Activated CD4-positive, alpha-beta T cell treated with anti-CD3 and anti-CD28 coated beads for 36 hours (primary cell): ENCODE measurements at regions of chr14 and their contacts with region 1.

Region 1: DNA sequence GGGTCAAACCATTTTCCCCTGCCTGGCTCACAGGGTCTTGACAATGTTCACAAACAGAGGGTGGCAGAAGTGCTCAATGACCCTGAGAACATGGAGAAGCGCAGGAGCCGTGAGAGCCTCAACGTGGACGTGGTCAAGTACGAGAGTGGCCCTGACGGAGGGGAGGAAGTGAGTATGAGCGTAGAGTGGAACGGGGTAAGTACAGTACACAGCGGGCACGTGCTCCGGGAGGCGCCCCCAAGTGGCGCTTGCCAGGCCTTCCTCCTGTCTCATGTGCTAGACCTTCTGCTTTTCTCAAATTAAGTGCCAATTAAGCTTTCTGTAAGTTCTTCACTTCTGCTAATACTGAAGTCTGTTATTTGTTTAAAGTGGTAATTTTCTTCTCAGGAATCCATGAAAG is 35.9 kb downstream of the XRCC3 start:
- DNase-seq: peak; percentile 74
- ATAC-seq: peak; percentile 98
- H3K4me3 Mint-ChIP-seq: no peak overlapping the region
- H3K27ac Mint-ChIP-seq: peak overlapping the region; percentile 33
- H3K4me1 Mint-ChIP-seq: peaks cover 2% of the 10 kb centered on the region
- H3K27me3 Mint-ChIP-seq: no peaks in the 10 kb centered on the region

Region 2: GRCh38 chr14:103576371-103577024 is 102.9 kb before region 1 on chr14:
- CTCF ChIA-PET with region 1: interaction called, 3 read pairs
- POLR2A ChIA-PET with region 1: no interaction called
- intact Hi-C with region 1: loop called (anchors 1 to 5 kb)
- DNase-seq: no peak
- ATAC-seq: no peak
- H3K4me3 Mint-ChIP-seq: no peak overlapping the region
- H3K27ac Mint-ChIP-seq: no peak overlapping the region
- H3K4me1 Mint-ChIP-seq: no peaks in the 10 kb centered on the region
- H3K27me3 Mint-ChIP-seq: no peaks in the 10 kb centered on the region

Region 3: DNA sequence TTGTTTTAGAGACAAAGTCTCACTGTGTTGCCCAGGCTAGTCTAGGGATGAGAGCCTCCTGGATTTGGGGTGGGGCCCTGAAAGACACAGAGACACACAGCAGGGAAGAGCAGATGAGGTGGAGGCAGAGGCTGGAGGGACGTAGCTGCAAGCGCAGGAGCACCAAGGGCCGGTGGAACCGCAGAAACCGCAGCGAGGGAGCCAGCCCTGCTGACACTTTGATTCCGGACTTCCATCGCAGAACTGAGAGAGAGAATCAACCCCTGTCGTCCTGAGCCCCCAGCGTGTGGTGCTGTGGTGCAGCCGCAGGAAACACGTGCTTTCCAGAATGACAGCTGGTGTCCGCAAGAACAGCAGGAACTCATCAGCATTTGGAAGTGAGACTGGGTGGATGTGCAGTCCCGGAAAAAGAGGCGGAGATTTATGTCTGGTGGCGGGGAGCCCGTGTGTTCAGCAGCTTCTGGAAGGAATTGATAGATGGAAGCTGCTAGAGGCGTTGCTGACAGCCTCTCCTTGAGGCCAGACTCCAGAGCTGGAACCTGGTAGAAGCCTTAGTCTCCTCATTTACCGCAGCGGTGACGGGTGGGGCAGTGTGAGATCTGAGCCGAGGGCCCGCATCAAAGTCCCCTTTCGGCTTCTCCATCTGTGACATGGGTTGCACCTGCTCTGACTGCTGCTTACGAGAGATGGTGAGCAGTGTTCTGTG is 72.2 kb before region 1 on chr14:
- CTCF ChIA-PET with region 1: interaction called, 3 read pairs
- POLR2A ChIA-PET with region 1: no interaction called
- intact Hi-C with region 1: loop called (anchors 5 kb)
- DNase-seq: peak; percentile 76
- ATAC-seq: peak; percentile 79
- H3K4me3 Mint-ChIP-seq: peak overlapping the region; percentile 29
- H3K27ac Mint-ChIP-seq: peak overlapping the region; percentile 59
- H3K4me1 Mint-ChIP-seq: peaks cover 20% of the 10 kb centered on the region
- H3K27me3 Mint-ChIP-seq: peaks cover 2% of the 10 kb centered on the region

Region 4: GRCh38 chr14:103613517-103613916 is 65.8 kb before region 1 on chr14:
- CTCF ChIA-PET with region 1: interaction called, 6 read pairs
- POLR2A ChIA-PET with region 1: no interaction called
- intact Hi-C with region 1: loop called (anchors 5 kb)
- DNase-seq: peak; percentile 44
- ATAC-seq: no peak
- H3K4me3 Mint-ChIP-seq: no peak overlapping the region
- H3K27ac Mint-ChIP-seq: no peak overlapping the region
- H3K4me1 Mint-ChIP-seq: peaks cover under 1% of the 10 kb centered on the region
- H3K27me3 Mint-ChIP-seq: peaks cover 2% of the 10 kb centered on the region

Region 5: GRCh38 chr14:103692159-103692558 is 12.8 kb after region 1 on chr14:
- CTCF ChIA-PET with region 1: interaction called, 12 read pairs
- POLR2A ChIA-PET with region 1: no interaction called
- intact Hi-C with region 1: no loop called
- DNase-seq: no peak
- ATAC-seq: no peak
- H3K4me3 Mint-ChIP-seq: no peak overlapping the region
- H3K27ac Mint-ChIP-seq: no peak overlapping the region
- H3K4me1 Mint-ChIP-seq: no peaks in the 10 kb centered on the region
- H3K27me3 Mint-ChIP-seq: no peaks in the 10 kb centered on the region

Region 6: DNA sequence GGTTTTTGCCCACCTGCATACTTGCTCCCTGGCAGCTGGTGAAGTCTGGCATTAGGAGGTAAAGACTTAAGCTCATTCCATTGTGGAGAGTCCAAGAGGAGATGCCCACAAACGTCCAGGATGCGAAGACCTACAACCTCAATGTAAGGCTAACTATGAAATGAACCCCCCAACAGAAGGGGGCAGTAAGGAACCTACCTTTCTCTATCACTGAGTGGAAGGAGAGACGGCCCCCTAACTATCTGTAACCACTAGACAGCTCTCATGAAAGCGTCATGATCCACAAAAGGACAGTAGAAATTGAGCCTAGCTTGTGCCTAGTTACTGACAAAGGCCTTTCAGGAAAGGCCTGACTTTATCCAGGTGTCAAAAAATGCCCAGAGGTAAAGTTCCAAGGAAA is 91.6 kb after region 1 on chr14:
- CTCF ChIA-PET with region 1: no interaction called
- POLR2A ChIA-PET with region 1: no interaction called
- intact Hi-C with region 1: no loop called
- DNase-seq: no peak
- ATAC-seq: no peak
- H3K4me3 Mint-ChIP-seq: no peak overlapping the region
- H3K27ac Mint-ChIP-seq: no peak overlapping the region
- H3K4me1 Mint-ChIP-seq: no peaks in the 10 kb centered on the region
- H3K27me3 Mint-ChIP-seq: no peaks in the 10 kb centered on the region

Region 7: GRCh38 chr14:103828315-103828967 is 149.1 kb after region 1 on chr14:
- CTCF ChIA-PET with region 1: no interaction called
- POLR2A ChIA-PET with region 1: no interaction called
- intact Hi-C with region 1: no loop called
- DNase-seq: peak; percentile 61
- ATAC-seq: peak; percentile 47
- H3K4me3 Mint-ChIP-seq: no peak overlapping the region
- H3K27ac Mint-ChIP-seq: no peak overlapping the region
- H3K4me1 Mint-ChIP-seq: peaks cover 9% of the 10 kb centered on the region
- H3K27me3 Mint-ChIP-seq: no peaks in the 10 kb centered on the region